Activated naive CD4-positive, alpha-beta T cell treated with anti-CD3 and anti-CD28 coated beads for 36 hours (primary cell): ENCODE measurements at regions of chr1 and their contacts with region 1.

Region 1: GRCh38 chr1:20493839-20494608 is 8.0 kb upstream of the CAMK2N1 start:
- DNase-seq: peak; percentile 91
- H3K4me3 Mint-ChIP-seq: no peak overlapping the region
- H3K27ac Mint-ChIP-seq: no peak overlapping the region
- H3K4me1 Mint-ChIP-seq: peaks cover 2% of the 10 kb centered on the region
- H3K27me3 Mint-ChIP-seq: no peaks in the 10 kb centered on the region

Region 2: DNA sequence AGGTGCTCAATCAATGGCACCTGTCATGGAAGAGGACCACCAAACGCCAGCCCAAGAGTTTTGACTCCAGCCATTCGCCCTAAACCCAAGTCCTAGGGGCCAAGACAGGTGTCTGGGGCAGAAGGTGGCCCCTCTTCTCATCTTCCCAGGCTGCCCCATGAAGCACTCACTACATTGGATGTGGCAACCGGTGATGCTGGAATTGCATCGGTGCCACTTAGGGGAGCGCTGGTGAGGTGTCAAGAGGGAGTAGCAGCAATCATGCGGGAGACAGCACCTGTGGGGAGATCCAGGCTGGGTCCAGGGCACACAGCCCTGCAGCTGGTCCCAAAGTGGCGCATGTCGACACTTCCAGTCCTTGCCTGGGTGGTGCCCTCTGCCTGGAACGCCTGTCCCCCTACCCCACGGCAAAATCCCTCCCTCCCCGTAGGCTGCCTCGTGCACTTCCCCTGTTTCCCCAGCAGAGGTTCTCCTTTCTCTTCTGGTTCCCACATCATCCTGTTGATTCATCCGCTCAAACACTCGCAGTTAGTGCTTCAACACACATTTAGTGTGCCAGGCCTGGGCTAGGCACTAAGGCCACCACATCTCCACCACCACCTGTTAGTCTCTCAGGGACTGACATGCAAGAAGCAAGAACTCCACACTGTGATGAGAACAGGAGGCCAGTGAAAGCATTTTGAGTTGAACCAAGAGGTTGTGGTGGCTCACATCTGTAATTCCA is 393.2 kb before region 1 on chr1:
- CTCF ChIA-PET with region 1: no interaction called
- intact Hi-C with region 1: loop called (anchors 2 kb)
- DNase-seq: peak; percentile 60
- H3K4me3 Mint-ChIP-seq: no peak overlapping the region
- H3K27ac Mint-ChIP-seq: no peak overlapping the region
- H3K4me1 Mint-ChIP-seq: peaks cover 8% of the 10 kb centered on the region
- H3K27me3 Mint-ChIP-seq: peaks cover 3% of the 10 kb centered on the region

Region 3: DNA sequence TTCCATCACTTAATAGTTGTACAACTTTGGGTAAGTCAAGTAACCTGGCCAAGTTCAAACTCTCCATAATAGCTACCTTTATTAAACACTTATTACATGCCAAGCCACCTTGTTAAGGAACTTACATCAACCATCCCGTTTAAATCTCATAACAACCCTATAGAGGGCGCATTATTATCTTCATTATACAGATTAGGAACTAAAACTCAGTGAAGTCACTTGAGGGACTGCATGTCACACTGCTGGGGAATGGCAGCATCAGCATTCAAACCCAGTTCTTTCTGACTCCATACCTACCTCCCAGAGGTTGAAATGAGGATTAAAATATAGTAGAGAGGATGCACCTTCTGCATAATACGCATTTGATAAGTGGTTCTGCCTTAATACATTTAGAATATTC is 260.6 kb before region 1 on chr1:
- CTCF ChIA-PET with region 1: interaction called, 7 read pairs
- intact Hi-C with region 1: loop called (anchors 1 kb)
- DNase-seq: no peak
- H3K4me3 Mint-ChIP-seq: no peak overlapping the region
- H3K27ac Mint-ChIP-seq: no peak overlapping the region
- H3K4me1 Mint-ChIP-seq: no peaks in the 10 kb centered on the region
- H3K27me3 Mint-ChIP-seq: peaks cover 33% of the 10 kb centered on the region

Region 4: DNA sequence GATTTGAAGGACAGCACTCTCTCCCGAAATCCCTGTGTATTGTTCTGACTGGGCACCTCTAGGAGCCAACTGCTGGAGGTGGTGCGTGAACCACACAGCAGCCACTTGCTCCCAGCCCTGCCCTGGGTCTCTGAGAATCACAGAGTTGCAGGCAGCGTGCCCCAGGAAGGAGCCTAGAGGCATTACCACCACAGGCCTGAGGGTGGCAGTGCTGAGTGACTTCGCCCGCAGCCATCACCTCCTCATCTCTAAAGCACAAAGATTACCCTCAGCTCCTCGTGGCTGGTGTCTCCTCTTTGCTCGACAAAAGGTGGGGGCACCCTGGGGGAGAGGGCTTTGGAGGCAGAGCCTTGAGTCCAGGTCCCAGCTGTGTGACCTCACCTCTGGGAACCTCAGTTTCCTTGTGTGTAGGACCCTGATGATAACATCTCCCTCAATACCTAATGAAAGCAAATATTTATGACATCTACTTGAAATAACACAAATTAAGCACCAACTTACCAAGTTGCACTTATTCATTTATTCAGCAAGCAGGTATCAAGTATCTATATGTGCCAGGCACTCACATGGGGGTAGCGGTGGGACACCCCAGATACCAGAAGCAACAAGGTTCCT is 117.0 kb before region 1 on chr1:
- CTCF ChIA-PET with region 1: interaction called, 17 read pairs
- intact Hi-C with region 1: loop called (anchors 1 kb)
- DNase-seq: peak; percentile 78
- H3K4me3 Mint-ChIP-seq: no peak overlapping the region
- H3K27ac Mint-ChIP-seq: no peak overlapping the region
- H3K4me1 Mint-ChIP-seq: peaks cover 4% of the 10 kb centered on the region
- H3K27me3 Mint-ChIP-seq: peaks cover 28% of the 10 kb centered on the region

Region 5: GRCh38 chr1:20507564-20508410 is 13.8 kb after region 1 on chr1 and contains the start of gene MUL1:
- CTCF ChIA-PET with region 1: interaction called, 11 read pairs
- intact Hi-C with region 1: loop called (anchors 1 kb)
- DNase-seq: peak; percentile 97
- H3K4me3 Mint-ChIP-seq: peak within 1 kb of the TSS; percentile 91
- H3K27ac Mint-ChIP-seq: peak within 1 kb of the TSS; percentile 83
- H3K4me1 Mint-ChIP-seq: peaks cover 21% of the 10 kb centered on the region
- H3K27me3 Mint-ChIP-seq: peaks cover under 1% of the 10 kb centered on the region
- total RNA-seq, gene MUL1: 10.9 to 12.1 TPM

Region 6: DNA sequence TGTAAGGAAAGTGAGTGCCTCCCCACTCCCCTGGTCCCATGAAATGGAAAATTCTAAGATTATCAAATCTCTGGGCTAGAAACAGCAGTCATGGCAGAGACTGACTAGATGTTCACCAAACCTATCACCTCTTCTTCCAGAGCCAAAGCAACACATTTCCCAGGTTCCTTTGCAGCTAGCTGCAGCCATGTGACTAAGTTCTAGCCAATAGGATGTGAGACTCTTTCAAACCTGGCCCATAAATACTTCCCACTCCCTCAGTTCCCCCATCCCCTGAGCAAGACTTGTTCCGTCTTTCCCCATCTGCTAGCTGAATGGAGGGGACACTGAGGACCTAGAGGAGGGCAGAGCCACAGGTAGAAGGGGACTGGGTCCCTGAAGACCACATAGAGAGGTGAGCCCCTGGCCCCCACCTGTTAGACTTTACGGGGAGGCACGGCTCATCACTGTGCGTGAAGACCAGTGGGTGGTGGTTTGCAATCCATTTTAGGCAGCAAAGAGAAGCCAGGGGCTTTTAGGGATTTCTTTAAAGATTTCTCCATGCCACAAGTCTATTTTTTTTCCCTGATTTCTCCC is 75.6 kb after region 1 on chr1:
- CTCF ChIA-PET with region 1: no interaction called
- intact Hi-C with region 1: no loop called
- DNase-seq: no peak
- H3K4me3 Mint-ChIP-seq: no peak overlapping the region
- H3K27ac Mint-ChIP-seq: no peak overlapping the region
- H3K4me1 Mint-ChIP-seq: no peaks in the 10 kb centered on the region
- H3K27me3 Mint-ChIP-seq: peaks cover 22% of the 10 kb centered on the region